ENCODE measurements at regions of chr7 and their contacts with region 1.

Region 1: GRCh38 chr7:111012799-111013675 is 77.9 kb upstream of the LRRN3 start:
- DNase-seq: no peak
- H3K4me3 ChIP-seq: no peak overlapping the region
- H3K27ac ChIP-seq: no peak overlapping the region
- H3K4me1 ChIP-seq: no peaks in the 10 kb centered on the region
- H3K27me3 ChIP-seq: no peaks in the 10 kb centered on the region
- CTCF ChIP-seq: no peak
- POLR2A ChIP-seq: no peak

Region 2: GRCh38 chr7:109834851-109835250 is 1178.2 kb before region 1 on chr7:
- intact Hi-C with region 1: loop called (anchors 5 kb)
- DNase-seq: no peak
- H3K4me3 ChIP-seq: no peak overlapping the region
- H3K27ac ChIP-seq: no peak overlapping the region
- H3K4me1 ChIP-seq: no peaks in the 10 kb centered on the region
- H3K27me3 ChIP-seq: no peaks in the 10 kb centered on the region
- CTCF ChIP-seq: no peak
- POLR2A ChIP-seq: no peak

Measured in breast epithelium (tissue), 4 donors.